Caco-2 (cell line): ENCODE measurements at regions of chr2 and their contacts with region 1.

Region 1: GRCh38 chr2:169528271-169528701 is 18.8 kb downstream of the KLHL41 start:
- DNase-seq: peak; percentile 70 to 81
- H3K4me3 ChIP-seq: no peak overlapping the region
- H3K4me3 Mint-ChIP-seq: no peak overlapping the region
- H3K27ac Mint-ChIP-seq: no peak overlapping the region
- H3K4me1 ChIP-seq: no peaks in the 10 kb centered on the region
- H3K4me1 Mint-ChIP-seq: peaks cover 13% of the 10 kb centered on the region
- H3K27me3 ChIP-seq: no peaks in the 10 kb centered on the region
- H3K27me3 Mint-ChIP-seq: no peaks in the 10 kb centered on the region
- CTCF ChIP-seq: peak; percentile 84 to 85

Region 2: DNA sequence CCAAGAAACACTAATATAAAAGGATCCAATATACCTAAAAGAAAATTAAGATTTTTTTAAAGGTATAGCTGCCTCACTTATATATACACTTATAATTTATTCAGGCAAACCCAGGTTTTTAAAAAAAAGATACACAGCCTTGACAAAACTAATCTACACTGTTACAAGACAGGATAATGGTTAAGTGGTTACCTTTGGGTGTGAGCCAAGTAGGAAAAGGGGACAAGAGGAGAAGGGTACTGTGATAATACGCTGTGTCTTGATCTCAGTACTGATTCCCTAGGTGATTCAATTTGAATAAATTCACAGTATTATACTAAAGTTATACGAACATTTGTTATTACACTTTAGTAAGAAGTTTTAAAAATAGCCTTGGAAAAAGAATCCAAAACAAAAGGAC is 11.9 kb after region 1 on chr2:
- CTCF ChIA-PET with region 1: no interaction called
- POLR2A ChIA-PET with region 1: no interaction called
- intact Hi-C with region 1: no loop called
- DNase-seq: no peak
- H3K4me3 ChIP-seq: no peak overlapping the region
- H3K4me3 Mint-ChIP-seq: no peak overlapping the region
- H3K27ac Mint-ChIP-seq: no peak overlapping the region
- H3K4me1 ChIP-seq: no peaks in the 10 kb centered on the region
- H3K4me1 Mint-ChIP-seq: no peaks in the 10 kb centered on the region
- H3K27me3 ChIP-seq: no peaks in the 10 kb centered on the region
- H3K27me3 Mint-ChIP-seq: no peaks in the 10 kb centered on the region
- CTCF ChIP-seq: no peak

Region 3: DNA sequence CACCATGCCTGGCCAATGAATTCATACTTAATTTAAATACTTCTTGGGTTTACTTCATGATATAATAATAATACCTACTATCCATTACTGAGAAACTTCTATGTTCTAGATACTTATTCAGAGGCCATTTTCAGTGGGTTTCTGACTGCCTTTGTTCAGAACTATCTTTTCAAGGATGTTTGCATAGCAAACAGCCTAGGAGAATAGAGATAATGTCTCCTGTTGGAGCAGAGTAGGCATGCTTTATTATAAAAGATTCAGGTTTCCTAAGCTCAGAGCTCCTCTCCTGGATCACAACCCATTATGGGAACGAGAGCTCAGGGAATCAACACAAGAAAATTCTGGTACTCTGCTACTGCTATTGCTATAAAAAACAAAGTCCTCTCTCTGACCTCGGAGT is 34.2 kb after region 1 on chr2:
- CTCF ChIA-PET with region 1: no interaction called
- POLR2A ChIA-PET with region 1: no interaction called
- intact Hi-C with region 1: no loop called
- DNase-seq: no peak
- H3K4me3 ChIP-seq: no peak overlapping the region
- H3K4me3 Mint-ChIP-seq: no peak overlapping the region
- H3K27ac Mint-ChIP-seq: no peak overlapping the region
- H3K4me1 ChIP-seq: no peaks in the 10 kb centered on the region
- H3K4me1 Mint-ChIP-seq: no peaks in the 10 kb centered on the region
- H3K27me3 ChIP-seq: no peaks in the 10 kb centered on the region
- H3K27me3 Mint-ChIP-seq: no peaks in the 10 kb centered on the region
- CTCF ChIP-seq: no peak

Region 4: GRCh38 chr2:169676357-169676756 is 148.1 kb after region 1 on chr2:
- CTCF ChIA-PET with region 1: no interaction called
- POLR2A ChIA-PET with region 1: no interaction called
- intact Hi-C with region 1: loop called (anchors 1 kb)
- DNase-seq: no peak
- H3K4me3 ChIP-seq: no peak overlapping the region
- H3K4me3 Mint-ChIP-seq: no peak overlapping the region
- H3K27ac Mint-ChIP-seq: no peak overlapping the region
- H3K4me1 ChIP-seq: no peaks in the 10 kb centered on the region
- H3K4me1 Mint-ChIP-seq: no peaks in the 10 kb centered on the region
- H3K27me3 ChIP-seq: no peaks in the 10 kb centered on the region
- H3K27me3 Mint-ChIP-seq: peaks cover 3% of the 10 kb centered on the region
- CTCF ChIP-seq: peak; percentile 30 to 55

Region 5: GRCh38 chr2:169790581-169790980 is 262.3 kb after region 1 on chr2:
- CTCF ChIA-PET with region 1: no interaction called
- POLR2A ChIA-PET with region 1: no interaction called
- intact Hi-C with region 1: loop called (anchors 2 kb)
- DNase-seq: no peak
- H3K4me3 ChIP-seq: no peak overlapping the region
- H3K4me3 Mint-ChIP-seq: no peak overlapping the region
- H3K27ac Mint-ChIP-seq: no peak overlapping the region
- H3K4me1 ChIP-seq: no peaks in the 10 kb centered on the region
- H3K4me1 Mint-ChIP-seq: no peaks in the 10 kb centered on the region
- H3K27me3 ChIP-seq: no peaks in the 10 kb centered on the region
- H3K27me3 Mint-ChIP-seq: no peaks in the 10 kb centered on the region
- CTCF ChIP-seq: no peak